ENCODE measurements at regions of chr10 and their contacts with region 1.

Region 1: DNA sequence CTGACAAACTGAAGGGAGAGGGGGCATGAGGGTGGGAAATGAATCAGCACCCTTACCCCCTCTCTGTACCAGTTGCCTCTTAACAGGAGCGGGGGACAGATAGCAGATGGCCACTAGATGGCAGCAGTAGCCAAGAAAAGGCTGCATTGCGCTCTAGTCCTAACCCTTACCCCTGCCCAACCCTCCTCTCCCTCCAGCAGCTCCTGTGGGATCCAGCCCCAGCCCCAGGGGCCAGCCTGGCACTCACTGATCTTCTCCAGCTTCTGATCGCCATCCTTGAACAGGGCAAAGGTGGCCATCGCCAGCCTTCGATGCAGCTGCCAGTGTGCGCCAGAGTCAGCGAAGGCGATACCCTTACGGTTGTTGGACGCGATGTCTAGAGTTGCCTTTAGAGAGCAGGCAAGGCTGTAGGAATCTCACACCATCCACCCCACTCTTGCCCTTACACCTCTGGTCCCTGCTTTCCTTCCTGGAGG is 2.2 kb downstream of the CYP17A1 start:
- DNase-seq: peak; percentile 83
- H3K4me3 ChIP-seq: no peak overlapping the region
- H3K27ac ChIP-seq: no peak overlapping the region
- H3K4me1 ChIP-seq: peaks cover 0 to 11% (median 8%) of the 10 kb centered on the region in 6 donors
- H3K27me3 ChIP-seq: peaks cover 0 to 12% (median 0%) of the 10 kb centered on the region in 7 donors
- CTCF ChIP-seq: peak; percentile 78 to 93 (median 88)
- POLR2A ChIP-seq: no peak

Region 2: DNA sequence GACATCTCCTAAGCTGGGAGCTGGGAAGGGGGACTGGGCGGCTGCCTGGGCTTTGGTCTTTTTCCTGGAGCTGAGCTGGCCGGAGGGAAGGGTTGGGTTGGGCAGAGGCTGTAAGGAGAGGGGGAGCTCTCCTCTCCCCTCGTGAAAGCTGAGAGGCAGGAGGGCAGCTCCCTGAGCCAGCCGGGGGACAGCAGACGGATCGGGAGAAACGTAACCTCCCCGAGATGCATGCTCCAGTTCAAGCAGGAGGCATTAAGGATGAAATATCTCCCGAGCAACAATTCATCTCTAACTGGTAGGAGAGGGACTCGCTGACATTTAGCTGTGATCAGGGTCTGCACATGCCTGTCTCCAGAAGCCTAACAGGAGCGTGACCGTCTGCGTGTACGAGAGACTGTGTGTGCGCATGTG is 1585.9 kb before region 1 on chr10:
- intact Hi-C with region 1: no loop called
- DNase-seq: no peak
- H3K4me3 ChIP-seq: no peak overlapping the region
- H3K27ac ChIP-seq: no peak overlapping the region
- H3K4me1 ChIP-seq: no peaks in the 10 kb centered on the region
- H3K27me3 ChIP-seq: peaks cover 0 to 93% (median 9%) of the 10 kb centered on the region in 7 donors
- CTCF ChIP-seq: no peak
- POLR2A ChIP-seq: no peak

Region 3: DNA sequence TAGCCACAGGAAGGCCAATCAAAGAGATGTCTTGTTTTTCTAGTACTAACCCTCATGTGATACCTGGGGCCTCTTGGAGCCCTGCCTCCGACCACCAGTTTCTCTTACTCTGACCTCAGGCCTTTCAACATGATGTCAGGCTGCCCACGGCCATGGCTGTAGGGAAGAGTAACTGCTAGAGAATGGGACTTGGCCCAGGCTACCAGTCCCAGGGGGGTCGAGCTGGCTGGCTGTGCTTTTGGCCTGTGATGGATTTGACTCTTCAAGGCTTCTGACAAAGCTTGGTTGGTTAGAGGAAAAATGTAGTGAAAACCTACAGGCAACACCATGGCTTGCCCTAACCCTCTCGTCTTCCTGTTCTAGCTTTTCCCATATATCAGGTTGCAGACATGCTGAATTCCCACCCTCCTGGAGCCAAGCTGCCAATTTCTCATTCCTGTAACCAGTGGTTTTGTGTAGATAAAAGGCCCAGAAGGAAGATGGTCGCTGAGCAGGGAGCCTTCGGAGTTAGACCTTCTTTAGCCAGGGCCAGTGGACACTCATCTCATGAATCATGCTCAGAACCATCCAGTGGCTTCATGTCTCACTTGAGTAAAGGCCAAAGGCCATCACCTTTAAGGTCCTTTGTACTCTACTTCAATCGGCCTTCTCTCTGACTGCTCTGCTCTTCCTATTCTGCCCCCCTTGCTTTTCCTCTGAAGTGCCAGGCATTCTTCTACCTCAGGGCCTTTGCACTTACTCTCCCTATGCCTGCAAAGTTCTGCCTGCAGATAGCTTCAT is 311.6 kb before region 1 on chr10:
- intact Hi-C with region 1: no loop called
- DNase-seq: peak; percentile 27
- H3K4me3 ChIP-seq: no peak overlapping the region
- H3K27ac ChIP-seq: no peak overlapping the region
- H3K4me1 ChIP-seq: no peaks in the 10 kb centered on the region
- H3K27me3 ChIP-seq: no peaks in the 10 kb centered on the region
- CTCF ChIP-seq: no peak
- POLR2A ChIP-seq: no peak

Region 4: DNA sequence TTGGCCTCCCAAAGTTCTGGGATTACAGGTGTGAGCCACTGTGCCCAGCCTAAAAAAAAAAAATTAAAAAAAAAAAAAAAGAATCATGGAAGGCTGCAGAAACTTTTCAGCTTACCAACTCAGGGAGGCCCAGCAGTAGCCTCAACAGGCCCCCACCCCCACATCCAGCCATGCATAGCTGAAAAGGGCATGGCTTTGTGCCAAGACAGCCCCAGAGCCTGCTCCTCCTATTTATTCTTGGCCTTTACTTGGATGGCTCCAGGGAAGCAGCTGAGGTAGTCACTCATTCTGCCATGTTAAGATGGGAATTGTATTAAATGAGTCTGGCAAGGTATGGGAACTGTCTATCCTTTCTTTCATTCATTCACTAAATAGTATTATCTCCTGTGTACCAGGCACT is 69.3 kb after region 1 on chr10:
- intact Hi-C with region 1: loop called (anchors 2 kb)
- DNase-seq: no peak
- H3K4me3 ChIP-seq: no peak overlapping the region
- H3K27ac ChIP-seq: no peak overlapping the region
- H3K4me1 ChIP-seq: no peaks in the 10 kb centered on the region
- H3K27me3 ChIP-seq: no peaks in the 10 kb centered on the region
- CTCF ChIP-seq: no peak
- POLR2A ChIP-seq: no peak

Region 5: DNA sequence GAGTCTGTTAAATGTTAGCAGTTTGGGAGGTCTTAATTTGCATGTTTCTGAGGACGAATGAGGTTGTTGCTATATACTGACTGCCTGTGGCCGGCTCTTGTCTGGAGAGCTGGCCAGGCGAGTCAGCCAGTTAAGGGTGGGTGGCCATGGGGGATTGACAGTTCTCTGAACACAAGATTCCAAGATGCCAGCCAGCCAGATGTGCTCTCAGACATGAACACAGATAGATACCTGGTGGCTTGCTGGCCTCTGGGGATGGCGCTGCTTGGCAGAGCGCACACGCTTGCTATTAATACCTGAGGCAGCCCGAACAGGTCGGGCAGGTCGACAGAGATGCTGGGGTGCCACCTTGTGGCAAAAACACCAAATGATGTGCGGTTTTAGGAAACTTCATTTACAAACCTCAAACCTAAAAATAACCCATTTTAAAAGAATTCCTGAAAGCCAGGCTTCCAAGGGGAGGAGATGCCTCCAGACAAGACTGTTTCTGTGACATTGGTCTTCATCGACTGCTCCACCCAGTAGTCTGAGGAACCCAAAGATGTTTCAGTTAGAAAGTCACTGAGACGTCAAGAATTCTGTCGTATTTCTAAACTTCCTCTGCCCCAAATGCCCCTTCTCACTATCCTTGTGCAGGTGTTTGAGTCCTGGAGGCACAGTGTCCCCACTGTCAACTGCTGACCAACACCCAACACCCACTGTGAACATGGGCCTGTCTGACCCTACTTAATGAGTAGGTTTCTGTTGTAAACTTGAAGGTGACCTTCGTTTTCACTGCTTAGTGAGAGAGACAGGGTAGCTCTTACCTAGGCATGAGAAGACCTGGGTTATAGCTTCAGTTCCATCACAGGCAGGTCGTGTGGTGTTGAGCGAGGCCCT is 234.6 kb after region 1 on chr10:
- intact Hi-C with region 1: loop called (anchors 10 kb)
- DNase-seq: peak; percentile 88
- H3K4me3 ChIP-seq: no peak overlapping the region
- H3K27ac ChIP-seq: peak overlapping the region in 5 of 8 donors; percentile 5 to 66 (median 34)
- H3K4me1 ChIP-seq: peaks cover 18 to 38% (median 20%) of the 10 kb centered on the region in 6 donors
- H3K27me3 ChIP-seq: no peaks in the 10 kb centered on the region
- CTCF ChIP-seq: peak; percentile 13 to 74 (median 60)
- POLR2A ChIP-seq: no peak

Region 6: GRCh38 chr10:103244663-103245271 is 409.7 kb after region 1 on chr10:
- intact Hi-C with region 1: loop called (anchors 5 kb)
- DNase-seq: peak; percentile 78
- H3K4me3 ChIP-seq: no peak overlapping the region
- H3K27ac ChIP-seq: no peak overlapping the region
- H3K4me1 ChIP-seq: peaks cover 0 to 35% (median 21%) of the 10 kb centered on the region in 6 donors
- H3K27me3 ChIP-seq: no peaks in the 10 kb centered on the region
- CTCF ChIP-seq: peak; percentile 79 to 92 (median 89)
- POLR2A ChIP-seq: no peak